ENCODE measurements at regions of chr7 and their contacts with region 1.

Region 1: DNA sequence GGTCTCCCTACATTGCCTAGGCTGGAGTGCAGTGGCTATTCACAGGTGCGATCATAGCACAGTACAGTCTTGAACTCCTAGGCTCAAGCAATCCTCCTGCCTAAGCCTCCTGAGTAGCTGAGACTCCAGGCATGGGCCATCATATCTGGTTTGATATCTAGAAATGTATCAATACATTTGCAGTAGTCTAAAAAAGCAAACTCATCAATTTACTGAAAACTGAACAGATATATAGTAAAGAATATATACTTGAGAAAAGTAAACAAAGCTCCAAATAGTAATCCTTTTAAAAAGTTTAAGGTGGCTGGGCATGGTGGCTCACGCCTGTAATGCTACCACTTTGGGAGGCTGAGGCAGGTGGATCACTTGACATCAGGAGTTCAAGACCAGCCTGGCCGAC is 57.1 kb upstream of the KMT2C start:
- DNase-seq: no peak
- ATAC-seq: no peak
- H3K4me3 ChIP-seq: no peak overlapping the region
- H3K4me3 Mint-ChIP-seq: no peak overlapping the region
- H3K27ac ChIP-seq: no peak overlapping the region
- H3K27ac Mint-ChIP-seq: no peak overlapping the region
- H3K4me1 ChIP-seq: no peaks in the 10 kb centered on the region
- H3K4me1 Mint-ChIP-seq: no peaks in the 10 kb centered on the region
- H3K27me3 ChIP-seq: no peaks in the 10 kb centered on the region
- H3K27me3 Mint-ChIP-seq: no peaks in the 10 kb centered on the region
- CTCF ChIP-seq: no peak

Region 2: GRCh38 chr7:152354066-152354465 is 138.9 kb before region 1 on chr7:
- CTCF ChIA-PET with region 1: no interaction called
- POLR2A ChIA-PET with region 1: no interaction called
- intact Hi-C with region 1: no loop called
- DNase-seq: no peak
- ATAC-seq: no peak
- H3K4me3 ChIP-seq: no peak overlapping the region
- H3K4me3 Mint-ChIP-seq: no peak overlapping the region
- H3K27ac ChIP-seq: no peak overlapping the region
- H3K27ac Mint-ChIP-seq: no peak overlapping the region
- H3K4me1 ChIP-seq: no peaks in the 10 kb centered on the region
- H3K4me1 Mint-ChIP-seq: peaks cover 34% of the 10 kb centered on the region
- H3K27me3 ChIP-seq: no peaks in the 10 kb centered on the region
- H3K27me3 Mint-ChIP-seq: no peaks in the 10 kb centered on the region
- CTCF ChIP-seq: no peak

Region 3: GRCh38 chr7:152451356-152452150 is 41.4 kb before region 1 on chr7:
- CTCF ChIA-PET with region 1: no interaction called
- POLR2A ChIA-PET with region 1: no interaction called
- intact Hi-C with region 1: loop called in 1 of 2 experiments (anchors 2 kb)
- DNase-seq: no peak
- ATAC-seq: no peak
- H3K4me3 ChIP-seq: no peak overlapping the region
- H3K4me3 Mint-ChIP-seq: no peak overlapping the region
- H3K27ac ChIP-seq: no peak overlapping the region
- H3K27ac Mint-ChIP-seq: no peak overlapping the region
- H3K4me1 ChIP-seq: no peaks in the 10 kb centered on the region
- H3K4me1 Mint-ChIP-seq: no peaks in the 10 kb centered on the region
- H3K27me3 ChIP-seq: no peaks in the 10 kb centered on the region
- H3K27me3 Mint-ChIP-seq: no peaks in the 10 kb centered on the region
- CTCF ChIP-seq: no peak